ENCODE measurements at regions of chr7 and their contacts with region 1.

Region 1: GRCh38 chr7:157158400-157158799 is 19.7 kb downstream of the UBE3C start:
- DNase-seq: no peak
- H3K4me3 ChIP-seq: no peak overlapping the region
- H3K27ac ChIP-seq: no peak overlapping the region
- H3K4me1 ChIP-seq: peaks cover 13% of the 10 kb centered on the region
- H3K27me3 ChIP-seq: no peaks in the 10 kb centered on the region
- CTCF ChIP-seq: no peak
- POLR2A ChIP-seq: no peak

Region 2: DNA sequence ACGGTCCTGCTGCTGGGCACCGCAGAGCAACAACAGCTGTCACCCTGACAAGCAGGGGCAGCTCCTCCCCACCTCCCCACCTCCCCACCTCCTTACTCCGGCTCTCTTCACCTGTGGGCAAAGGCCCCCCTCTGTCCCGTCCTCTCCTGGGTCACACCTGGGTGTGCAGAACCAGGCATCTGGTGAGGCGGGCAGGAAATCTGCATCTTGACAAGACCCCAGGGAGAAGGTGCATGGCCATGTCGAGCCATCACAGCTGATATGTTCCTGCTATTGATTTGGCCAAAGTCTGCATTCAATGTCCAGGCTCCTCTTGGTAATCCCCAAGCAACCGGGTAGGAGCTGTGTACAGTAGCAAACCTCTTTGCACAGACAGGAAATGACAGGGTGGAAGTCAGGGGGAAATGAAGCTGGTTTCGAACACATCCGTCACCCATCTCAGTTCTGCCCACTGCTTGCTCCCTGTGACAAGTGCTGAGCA is 732.6 kb after region 1 on chr7:
- intact Hi-C with region 1: loop called (anchors 5 kb)
- DNase-seq: no peak
- H3K4me3 ChIP-seq: no peak overlapping the region
- H3K27ac ChIP-seq: no peak overlapping the region
- H3K4me1 ChIP-seq: no peaks in the 10 kb centered on the region
- H3K27me3 ChIP-seq: no peaks in the 10 kb centered on the region
- CTCF ChIP-seq: no peak
- POLR2A ChIP-seq: no peak

Measured in vagina (tissue), 2 donors.